ENCODE measurements at regions of chr12 and their contacts with region 1.

Region 1: GRCh38 chr12:49866859-49867579 is 24.1 kb upstream of the BCDIN3D start:
- DNase-seq: no peak
- H3K4me3 ChIP-seq: no peak overlapping the region
- CTCF ChIP-seq: peak; percentile 96

Region 2: GRCh38 chr12:49842519-49843352 is 24.3 kb before region 1 on chr12 and contains the start of gene BCDIN3D:
- CTCF ChIA-PET with region 1: interaction called, 78 read pairs
- POLR2A ChIA-PET with region 1: no interaction called
- DNase-seq: peak; percentile 29
- H3K4me3 ChIP-seq: peak within 1 kb of the TSS; percentile 86
- CTCF ChIP-seq: no peak

Region 3: DNA sequence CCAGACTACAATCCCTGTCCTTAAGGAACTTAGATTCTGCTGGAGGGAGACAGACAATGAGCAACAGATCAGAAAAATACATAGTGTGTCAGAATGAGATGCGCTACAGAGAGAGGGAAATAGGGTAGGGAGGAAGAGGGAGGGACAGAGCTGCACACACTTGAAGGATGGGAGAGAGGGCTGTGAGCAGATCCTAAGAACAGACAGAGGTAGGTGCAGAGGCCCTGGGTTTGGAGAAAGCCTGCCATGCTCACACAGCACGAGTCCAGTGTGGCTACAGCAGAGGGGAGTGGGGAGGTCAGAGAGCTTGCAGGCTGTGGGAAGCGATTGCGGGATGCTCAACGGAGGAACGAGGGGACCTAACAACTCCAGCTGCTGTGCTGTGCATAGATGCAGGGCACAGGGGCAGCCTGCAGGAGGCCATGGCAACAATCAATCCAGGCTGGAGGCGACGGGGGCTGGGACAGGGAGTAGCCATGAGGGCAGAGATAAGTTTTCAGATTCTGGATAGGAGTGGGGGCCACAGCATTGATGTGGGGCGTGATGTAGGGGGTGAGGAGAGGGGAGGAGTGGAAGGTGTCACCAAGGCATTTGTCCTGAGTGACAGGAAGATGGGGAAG is 15.9 kb after region 1 on chr12:
- CTCF ChIA-PET with region 1: interaction called, 23 read pairs
- POLR2A ChIA-PET with region 1: no interaction called
- DNase-seq: no peak
- H3K4me3 ChIP-seq: no peak overlapping the region
- CTCF ChIP-seq: no peak

Region 4: GRCh38 chr12:49930515-49931288 is 63.7 kb after region 1 on chr12:
- CTCF ChIA-PET with region 1: interaction called, 10 read pairs
- POLR2A ChIA-PET with region 1: no interaction called
- DNase-seq: no peak
- H3K4me3 ChIP-seq: no peak overlapping the region
- CTCF ChIP-seq: no peak

Region 5: DNA sequence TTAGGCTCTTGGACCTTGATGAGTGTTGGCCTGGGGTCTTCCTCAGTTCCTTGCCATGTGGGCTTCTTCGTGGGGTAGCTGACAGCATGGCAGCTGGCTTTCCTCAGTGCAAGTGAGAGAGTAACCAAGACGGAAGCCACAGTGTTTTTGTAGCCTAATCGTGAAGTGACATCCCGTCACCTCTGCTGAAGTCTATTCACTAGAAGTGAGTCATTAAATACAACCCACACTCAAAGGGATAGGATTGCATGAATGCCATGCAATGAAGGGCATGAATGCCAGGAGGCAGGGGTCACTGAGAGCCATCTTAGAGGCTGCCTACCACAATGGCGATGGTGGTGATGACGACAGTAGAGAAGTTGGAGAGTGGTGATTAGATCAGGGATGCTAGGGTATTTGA is 176.8 kb after region 1 on chr12:
- CTCF ChIA-PET with region 1: interaction called, 24 read pairs
- POLR2A ChIA-PET with region 1: no interaction called
- DNase-seq: no peak
- H3K4me3 ChIP-seq: no peak overlapping the region
- CTCF ChIP-seq: no peak

Region 6: GRCh38 chr12:50055831-50056638 is 189.0 kb after region 1 on chr12:
- CTCF ChIA-PET with region 1: interaction called, 22 read pairs
- POLR2A ChIA-PET with region 1: no interaction called
- DNase-seq: no peak
- H3K4me3 ChIP-seq: peak overlapping the region; percentile 29
- CTCF ChIP-seq: peak; percentile 88

Region 7: GRCh38 chr12:50174971-50175715 is 308.1 kb after region 1 on chr12:
- CTCF ChIA-PET with region 1: no interaction called
- POLR2A ChIA-PET with region 1: no interaction called
- DNase-seq: no peak
- H3K4me3 ChIP-seq: no peak overlapping the region
- CTCF ChIP-seq: peak; percentile 2

Measured in AG04449 (cell line).